ENCODE measurements at regions of chr16 and their contacts with region 1.

Region 1: GRCh38 chr16:71610936-71611871 is 14.8 kb upstream of the MARVELD3 start:
- DNase-seq: peak; percentile 93
- H3K4me3 Mint-ChIP-seq: peak overlapping the region; percentile 41
- H3K27ac Mint-ChIP-seq: no peak overlapping the region
- H3K4me1 Mint-ChIP-seq: peaks cover 10% of the 10 kb centered on the region
- H3K27me3 Mint-ChIP-seq: peaks cover 4% of the 10 kb centered on the region

Region 2: GRCh38 chr16:71961066-71962039 is 350.1 kb after region 1 on chr16:
- intact Hi-C with region 1: loop called (anchors 5 kb)
- DNase-seq: peak; percentile 94
- H3K4me3 Mint-ChIP-seq: no peak overlapping the region
- H3K27ac Mint-ChIP-seq: no peak overlapping the region
- H3K4me1 Mint-ChIP-seq: peaks cover 5% of the 10 kb centered on the region
- H3K27me3 Mint-ChIP-seq: peaks cover 8% of the 10 kb centered on the region

Measured in activated CD4-positive, alpha-beta T cell treated with anti-CD3 and anti-CD28 coated beads, Interleukin-2, amount 10 ng/mL, durations not matched to agents 24 days and 14 days (primary cell).